ENCODE measurements at regions of chr7 and their contacts with region 1.

Region 1: GRCh38 chr7:126079581-126079980 is 1150.0 kb upstream of the POT1 start:
- DNase-seq: no peak
- H3K4me3 ChIP-seq: no peak overlapping the region
- H3K4me3 Mint-ChIP-seq: no peak overlapping the region
- H3K27ac Mint-ChIP-seq: no peak overlapping the region
- H3K4me1 ChIP-seq: no peaks in the 10 kb centered on the region
- H3K4me1 Mint-ChIP-seq: no peaks in the 10 kb centered on the region
- H3K27me3 ChIP-seq: no peaks in the 10 kb centered on the region
- H3K27me3 Mint-ChIP-seq: no peaks in the 10 kb centered on the region
- CTCF ChIP-seq: no peak

Region 2: DNA sequence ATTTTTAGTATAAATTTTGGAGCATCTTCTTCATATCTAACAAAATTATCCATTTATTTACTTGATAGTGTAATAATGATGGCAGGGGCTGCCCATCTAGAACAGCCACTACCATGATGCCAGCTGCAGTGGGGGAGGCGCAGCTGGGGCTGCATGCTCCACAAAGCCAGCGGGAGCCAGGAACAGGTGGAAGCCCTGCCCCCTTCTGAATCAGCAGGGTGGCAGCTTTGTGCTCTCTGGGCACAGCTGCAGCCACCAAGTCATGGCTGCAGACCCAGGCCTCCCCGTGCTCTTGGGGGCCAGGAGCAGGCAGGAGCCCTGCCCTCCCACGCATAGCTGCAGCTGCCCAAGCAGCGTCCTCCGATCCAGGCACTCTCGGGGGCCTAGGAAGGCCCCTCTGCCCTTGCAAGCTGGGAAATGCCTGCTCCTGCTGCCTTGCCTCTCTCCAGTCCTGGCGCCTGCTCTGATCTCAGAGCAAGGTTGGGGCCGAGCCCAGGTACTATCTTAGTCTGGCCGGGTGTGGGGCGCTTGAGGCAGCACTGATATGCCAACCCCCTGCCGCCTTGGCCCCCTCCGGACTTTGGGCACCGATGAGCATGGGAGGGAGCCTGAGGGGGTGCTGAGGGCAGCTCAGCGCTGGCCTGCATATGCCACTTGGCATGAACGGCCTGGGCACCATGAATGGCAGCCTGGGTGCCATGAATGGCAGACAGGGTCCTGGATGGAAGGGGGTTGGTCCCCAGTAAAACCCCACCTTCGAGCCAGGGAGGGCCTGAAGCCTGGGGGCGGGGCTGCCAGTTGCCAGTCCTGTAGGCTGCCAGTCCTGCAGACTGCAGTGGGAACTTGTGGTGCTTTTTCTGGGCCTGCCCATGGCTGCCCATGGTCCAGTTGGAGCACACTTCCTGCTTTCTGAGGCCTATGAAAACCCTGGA is 39.2 kb before region 1 on chr7:
- CTCF ChIA-PET with region 1: no interaction called
- POLR2A ChIA-PET with region 1: no interaction called
- intact Hi-C with region 1: loop called (anchors 1 kb)
- DNase-seq: no peak
- H3K4me3 ChIP-seq: no peak overlapping the region
- H3K4me3 Mint-ChIP-seq: no peak overlapping the region
- H3K27ac Mint-ChIP-seq: no peak overlapping the region
- H3K4me1 ChIP-seq: no peaks in the 10 kb centered on the region
- H3K4me1 Mint-ChIP-seq: no peaks in the 10 kb centered on the region
- H3K27me3 ChIP-seq: no peaks in the 10 kb centered on the region
- H3K27me3 Mint-ChIP-seq: no peaks in the 10 kb centered on the region
- CTCF ChIP-seq: no peak

Region 3: GRCh38 chr7:126163647-126164046 is 84.1 kb after region 1 on chr7:
- CTCF ChIA-PET with region 1: no interaction called
- POLR2A ChIA-PET with region 1: no interaction called
- intact Hi-C with region 1: no loop called
- DNase-seq: no peak
- H3K4me3 ChIP-seq: no peak overlapping the region
- H3K4me3 Mint-ChIP-seq: no peak overlapping the region
- H3K27ac Mint-ChIP-seq: no peak overlapping the region
- H3K4me1 ChIP-seq: no peaks in the 10 kb centered on the region
- H3K4me1 Mint-ChIP-seq: no peaks in the 10 kb centered on the region
- H3K27me3 ChIP-seq: no peaks in the 10 kb centered on the region
- H3K27me3 Mint-ChIP-seq: no peaks in the 10 kb centered on the region
- CTCF ChIP-seq: no peak

Measured in Caco-2 (cell line).